ENCODE measurements at regions of chr1 and their contacts with region 1.

Region 1: DNA sequence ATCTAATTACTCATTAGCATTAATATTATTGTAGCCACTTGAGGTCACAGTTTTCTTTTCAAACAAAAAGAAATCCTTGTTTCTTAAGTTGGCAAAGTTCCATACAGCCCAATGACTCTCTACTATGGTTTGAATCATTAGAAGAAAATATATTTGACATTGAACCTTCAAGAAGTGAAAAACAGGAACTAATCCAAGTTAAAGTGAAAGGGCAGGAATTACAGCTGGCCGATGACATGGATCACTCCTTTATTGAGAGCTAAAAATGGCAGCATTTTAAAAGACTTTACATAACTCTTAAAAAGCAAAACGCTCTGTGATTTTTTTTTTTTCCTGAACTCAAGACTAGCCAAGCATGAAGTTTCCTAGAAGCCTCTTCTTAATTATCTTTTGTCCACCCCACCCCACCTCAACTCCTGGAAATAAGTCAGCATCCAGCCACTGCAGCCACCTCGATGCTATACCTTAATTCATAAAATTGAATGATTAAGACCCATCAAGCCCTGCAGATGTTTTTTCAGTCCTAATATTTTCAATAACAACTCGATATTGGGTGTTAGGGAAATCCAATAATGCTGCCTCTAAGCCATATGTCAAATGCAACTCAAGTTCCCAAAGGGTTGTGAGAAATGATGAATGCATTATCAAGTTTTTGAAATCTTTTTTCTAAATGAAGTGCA is 323.1 kb downstream of the HHIPL2 start:
- DNase-seq: no peak
- H3K4me3 ChIP-seq: no peak overlapping the region
- CTCF ChIP-seq: no peak

Region 2: DNA sequence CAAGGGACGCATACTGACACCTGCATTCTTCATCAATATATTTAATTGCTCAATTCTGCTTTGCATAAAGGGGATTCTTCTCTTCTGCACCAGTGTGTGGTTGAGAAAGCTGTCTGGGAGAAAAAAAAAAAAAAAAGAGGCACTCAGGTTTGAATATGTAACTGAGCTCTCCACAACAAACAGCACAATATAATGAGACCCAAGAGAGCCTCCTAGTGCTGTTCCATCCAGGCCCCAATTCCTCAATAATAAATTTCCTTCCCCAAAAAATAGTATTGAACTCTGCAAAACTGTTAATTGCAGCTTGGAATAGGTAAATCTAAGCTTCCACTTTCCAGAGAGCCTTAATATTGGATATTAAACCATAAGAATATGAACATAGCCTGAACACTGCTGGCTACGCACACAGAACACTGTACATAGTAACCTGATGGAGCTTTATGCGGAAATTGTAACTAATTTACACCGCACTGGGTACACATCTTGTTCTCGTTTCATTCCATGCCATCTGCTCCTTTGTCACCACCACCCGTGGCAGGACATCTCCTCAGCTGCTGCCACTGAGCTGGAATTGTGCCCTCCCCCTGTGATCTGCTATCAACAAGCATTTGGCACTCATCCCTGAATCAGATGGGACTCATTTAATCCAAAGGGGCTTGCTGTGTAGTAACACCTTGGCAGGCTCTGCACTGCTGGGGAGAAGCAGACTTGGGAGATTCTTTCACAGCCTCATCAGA is 51.1 kb after region 1 on chr1:
- in situ Hi-C with region 1: loop called (anchors 5 kb)
- DNase-seq: no peak
- H3K4me3 ChIP-seq: no peak overlapping the region
- CTCF ChIP-seq: no peak